ENCODE measurements at regions of chr12 and their contacts with region 1.

Region 1: GRCh38 chr12:69015841-69016240 is 82.9 kb upstream of the CPM start:
- DNase-seq: no peak
- H3K4me3 ChIP-seq: no peak overlapping the region
- H3K27me3 ChIP-seq: no peaks in the 10 kb centered on the region
- CTCF ChIP-seq: no peak

Region 2: DNA sequence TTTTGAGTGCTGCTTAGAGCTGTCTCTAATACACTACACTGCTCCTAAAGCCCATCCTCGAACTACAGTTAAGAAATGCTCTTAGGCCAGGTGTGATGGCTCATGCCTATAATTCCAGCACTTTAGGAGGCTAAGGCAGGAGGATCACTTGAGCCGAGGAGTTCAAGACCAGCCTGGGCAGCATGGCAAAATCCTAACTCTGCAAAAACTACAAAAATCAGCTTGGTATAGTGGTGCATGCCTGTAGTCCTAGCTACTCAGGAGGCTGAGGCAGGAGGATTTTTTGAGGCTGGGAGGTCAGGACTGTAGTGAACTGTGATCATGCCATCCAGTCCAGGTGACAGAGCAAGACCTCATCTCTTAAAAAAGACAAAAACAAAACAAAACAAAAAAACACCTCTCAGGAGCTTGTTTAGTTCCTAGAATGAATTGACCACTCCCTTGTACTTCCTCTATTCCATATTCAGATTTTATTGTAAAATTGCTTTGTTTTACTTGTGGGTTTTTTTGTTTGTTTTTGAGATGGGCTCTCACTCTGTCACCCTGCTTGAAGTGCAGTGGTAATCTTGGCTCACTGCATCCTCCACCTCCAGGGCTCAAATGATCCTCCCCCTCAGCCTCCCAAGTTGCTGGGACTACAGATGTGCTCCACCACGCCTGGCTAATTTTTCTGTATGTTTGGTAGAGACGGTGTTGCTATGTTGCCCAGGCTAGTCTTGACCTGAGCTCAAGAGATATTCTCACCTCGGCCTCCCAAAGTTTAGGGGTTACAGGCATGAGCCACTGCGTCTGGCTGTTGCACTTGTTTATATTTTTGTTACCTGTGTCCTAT is 194.3 kb before region 1 on chr12:
- CTCF ChIA-PET with region 1: no interaction called
- POLR2A ChIA-PET with region 1: interaction called, 11 read pairs
- DNase-seq: no peak
- H3K4me3 ChIP-seq: no peak overlapping the region
- H3K27me3 ChIP-seq: no peaks in the 10 kb centered on the region
- CTCF ChIP-seq: no peak

Region 3: GRCh38 chr12:69000540-69001243 is 15.1 kb before region 1 on chr12:
- CTCF ChIA-PET with region 1: no interaction called
- POLR2A ChIA-PET with region 1: no interaction called
- DNase-seq: no peak
- H3K4me3 ChIP-seq: no peak overlapping the region
- H3K27me3 ChIP-seq: no peaks in the 10 kb centered on the region
- CTCF ChIP-seq: no peak

Region 4: DNA sequence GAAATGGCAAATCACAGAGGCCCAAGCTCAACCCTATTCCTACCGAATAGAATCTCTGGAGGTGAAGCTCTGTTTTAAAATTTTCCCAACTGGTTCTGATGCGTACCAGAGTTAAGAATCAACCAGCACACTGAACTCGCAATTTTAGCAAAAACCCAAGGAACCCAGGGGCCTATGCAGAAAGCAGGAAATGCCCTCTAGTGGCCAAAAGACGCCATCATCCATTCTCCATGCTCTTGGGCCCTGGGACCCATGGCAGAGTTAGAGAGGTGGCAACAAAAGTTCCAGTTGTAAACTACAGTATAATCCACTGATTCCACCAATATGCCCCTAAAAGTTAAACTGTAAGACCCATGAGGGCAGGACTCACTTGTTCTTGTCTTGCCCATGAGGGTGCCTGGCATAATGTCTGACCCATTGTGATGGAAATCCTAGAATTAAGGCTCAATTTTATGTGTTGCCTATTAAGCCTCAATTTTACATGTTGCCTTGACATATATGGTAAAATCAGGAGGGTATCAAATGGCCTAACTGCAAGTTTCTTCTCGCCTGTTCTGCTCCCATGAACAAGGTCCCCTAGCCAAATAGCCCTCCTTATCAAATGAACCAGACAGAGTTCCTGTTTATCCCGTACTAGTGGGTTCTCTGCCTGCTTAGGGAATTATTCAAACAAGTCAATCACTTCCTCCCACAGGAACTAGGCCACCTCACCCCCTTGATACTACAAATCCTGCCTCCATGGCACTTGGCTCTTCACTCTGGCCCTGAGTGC is 54.7 kb after region 1 on chr12:
- CTCF ChIA-PET with region 1: no interaction called
- POLR2A ChIA-PET with region 1: no interaction called
- DNase-seq: no peak
- H3K4me3 ChIP-seq: no peak overlapping the region
- H3K27me3 ChIP-seq: no peaks in the 10 kb centered on the region
- CTCF ChIP-seq: peak; percentile 90